HEK293 (cell line): ENCODE measurements at regions of chr10 and their contacts with region 1.

Region 1: DNA sequence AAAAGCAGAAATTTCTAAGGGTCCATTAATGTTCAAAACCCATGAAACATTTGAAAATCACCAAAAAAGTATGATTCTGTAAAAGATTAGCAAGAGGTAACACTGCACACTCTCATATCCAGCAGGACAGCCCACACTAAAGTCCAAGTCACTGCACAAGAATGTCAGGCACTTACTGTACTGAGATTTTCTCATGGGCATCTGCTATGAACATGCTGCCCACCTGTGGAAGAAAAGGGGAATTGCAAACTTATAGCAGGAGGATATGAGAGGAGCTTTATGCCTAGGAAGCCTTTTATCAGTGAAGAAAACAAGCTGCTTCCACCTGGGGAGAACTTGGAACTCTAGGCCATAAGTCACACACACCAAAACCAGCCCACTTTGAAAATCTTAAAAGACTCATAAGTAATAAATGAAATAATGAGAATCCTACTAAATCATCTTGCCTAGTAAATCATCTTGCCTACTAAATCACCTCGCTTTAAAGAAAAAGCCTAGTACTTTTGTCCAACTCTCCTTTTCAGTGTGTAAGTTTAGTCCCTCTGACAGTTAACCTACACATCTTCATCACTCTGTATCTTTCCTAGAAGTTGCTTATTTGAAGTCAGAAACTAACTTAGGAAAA is 46.1 kb downstream of the ARMH3 start:
- H3K4me3 ChIP-seq: no peak overlapping the region
- H3K27ac ChIP-seq: no peak overlapping the region
- H3K4me1 ChIP-seq: no peaks in the 10 kb centered on the region
- CTCF ChIP-seq: peak; percentile 80; the same call in 1 of the 2 replicates

Region 2: DNA sequence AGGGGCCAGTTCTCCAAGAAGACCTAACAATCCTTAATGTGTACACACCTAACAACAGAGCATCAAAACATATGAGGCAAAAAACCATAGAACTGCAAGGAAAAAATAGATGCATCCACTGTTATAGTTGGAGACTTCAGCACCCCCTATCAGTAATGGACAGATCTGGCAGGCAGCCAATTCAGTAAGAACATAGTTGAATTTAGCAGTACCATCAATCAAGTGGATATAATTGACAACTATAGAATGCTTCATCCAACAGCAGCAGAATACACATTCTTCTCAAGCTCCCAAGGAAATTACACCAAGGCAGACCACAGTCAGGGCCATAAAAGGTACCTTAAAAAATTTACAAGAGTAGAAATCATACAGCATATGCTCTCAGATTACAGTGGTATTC is 464.0 kb before region 1 on chr10:
- CTCF ChIA-PET with region 1: no interaction called
- POLR2A ChIA-PET with region 1: no interaction called
- H3K4me3 ChIP-seq: no peak overlapping the region
- H3K27ac ChIP-seq: no peak overlapping the region
- H3K4me1 ChIP-seq: 0 out of 2 replicates have a peak, but pooled peaks cover 3% of the 10 kb centered on the region
- CTCF ChIP-seq: no peak

Region 3: DNA sequence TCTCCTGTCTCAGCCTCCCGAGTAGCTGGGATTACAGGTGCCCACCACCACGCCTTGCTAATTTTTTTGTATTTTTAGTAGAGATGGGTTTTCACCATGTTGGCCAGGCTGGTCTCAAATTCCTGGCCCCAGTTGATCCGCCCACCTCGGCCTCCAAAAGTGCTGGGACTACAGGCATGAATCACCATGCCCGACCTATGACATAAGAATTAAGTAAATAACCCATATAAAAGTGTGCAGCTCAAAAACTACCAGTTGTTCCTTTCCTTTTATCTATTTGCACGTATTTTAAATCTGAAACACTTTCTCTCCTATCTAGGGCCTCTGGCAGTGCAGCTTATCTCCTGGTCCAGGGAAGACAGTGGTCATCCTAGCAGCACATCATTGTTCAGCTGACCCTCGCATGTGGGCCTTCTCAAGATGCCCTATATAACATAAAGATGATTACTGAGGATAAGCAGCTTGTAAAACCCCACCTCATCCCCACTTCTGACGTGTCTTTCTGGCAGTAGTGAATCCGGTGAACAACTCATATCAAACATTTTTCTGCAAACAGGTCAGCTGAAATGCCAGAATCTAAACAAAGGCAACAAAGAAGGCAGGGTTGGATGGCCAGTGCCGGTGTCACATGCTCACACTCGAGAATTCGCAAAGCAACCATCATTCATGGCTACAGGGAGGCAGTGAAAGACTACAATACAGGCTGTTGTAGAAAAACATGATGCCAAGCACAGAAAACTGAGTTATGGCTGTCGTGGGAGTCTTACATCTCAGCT is 130.3 kb before region 1 on chr10:
- CTCF ChIA-PET with region 1: interaction called, 55 read pairs
- POLR2A ChIA-PET with region 1: no interaction called
- H3K4me3 ChIP-seq: no peak overlapping the region
- H3K27ac ChIP-seq: no peak overlapping the region
- H3K4me1 ChIP-seq: no peaks in the 10 kb centered on the region; the same call in 1 of the 2 replicates
- CTCF ChIP-seq: no peak

Region 4: DNA sequence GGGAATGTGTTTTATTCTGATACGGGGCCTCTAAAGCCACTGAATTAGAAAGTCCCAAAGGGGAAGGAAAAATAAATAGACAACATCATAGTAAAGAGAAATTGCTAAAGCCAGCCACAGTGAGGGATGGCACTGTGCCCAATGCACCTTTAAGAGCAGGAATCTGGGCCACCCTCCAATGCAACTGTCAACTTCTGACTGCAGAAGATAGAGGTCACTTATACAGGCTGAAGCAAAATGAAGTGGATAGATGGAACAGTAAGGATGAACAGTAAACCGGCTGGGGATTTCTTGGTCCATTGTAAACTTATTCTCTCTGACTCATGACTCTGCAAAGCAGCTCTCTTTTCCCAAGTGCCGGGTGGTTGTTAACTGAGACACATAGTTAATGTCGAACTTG is 112.3 kb before region 1 on chr10:
- CTCF ChIA-PET with region 1: interaction called, 167 read pairs
- POLR2A ChIA-PET with region 1: interaction called, 3 read pairs
- H3K4me3 ChIP-seq: no peak overlapping the region
- H3K27ac ChIP-seq: no peak overlapping the region; the same call in 1 of the 2 replicates
- H3K4me1 ChIP-seq: peaks cover 26% of the 10 kb centered on the region
- CTCF ChIP-seq: no peak

Region 5: DNA sequence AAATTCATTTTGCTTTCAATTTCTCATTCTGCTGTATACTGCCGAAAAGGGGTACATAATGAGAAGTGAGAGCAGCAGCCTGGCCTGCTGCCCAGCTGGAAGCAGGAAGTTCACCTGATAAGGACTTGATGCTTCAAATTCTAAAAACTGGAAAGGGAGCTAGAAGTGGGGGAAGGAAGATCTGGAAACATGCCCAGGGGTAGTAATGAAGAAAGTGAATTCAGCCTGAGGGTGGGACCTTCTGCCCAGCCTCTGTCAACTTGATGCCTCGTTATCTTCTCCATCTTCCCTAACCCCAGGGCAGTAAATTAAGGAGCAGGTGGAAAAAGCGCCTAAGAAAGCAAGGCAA is 23.3 kb before region 1 on chr10:
- CTCF ChIA-PET with region 1: interaction called, 17 read pairs
- POLR2A ChIA-PET with region 1: no interaction called
- H3K4me3 ChIP-seq: no peak overlapping the region
- H3K27ac ChIP-seq: peak overlapping the region; percentile 50; the same call in 1 of the 2 replicates
- H3K4me1 ChIP-seq: peaks cover 16% of the 10 kb centered on the region
- CTCF ChIP-seq: no peak

Region 6: DNA sequence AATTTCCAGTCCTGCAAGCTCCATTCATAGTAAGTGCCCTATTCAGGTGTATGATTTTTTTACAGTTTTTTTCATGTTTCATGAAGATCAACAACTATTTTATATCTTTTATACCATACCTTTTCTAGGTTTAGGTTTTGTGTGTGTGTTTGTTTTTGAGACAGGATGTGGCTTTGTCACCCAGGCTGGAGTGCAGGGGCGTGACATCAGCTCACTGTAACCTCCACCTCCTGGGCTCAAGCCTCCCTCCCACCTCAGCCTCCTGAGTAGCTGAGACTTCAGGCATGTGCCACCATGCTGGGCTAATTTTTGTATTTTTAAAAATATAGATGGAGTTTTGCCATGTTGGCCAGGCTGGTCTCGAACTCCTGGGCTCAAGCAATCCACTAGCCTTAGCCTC is 11.0 kb after region 1 on chr10:
- CTCF ChIA-PET with region 1: interaction called, 31 read pairs
- POLR2A ChIA-PET with region 1: no interaction called
- H3K4me3 ChIP-seq: no peak overlapping the region
- H3K27ac ChIP-seq: no peak overlapping the region
- H3K4me1 ChIP-seq: no peaks in the 10 kb centered on the region
- CTCF ChIP-seq: no peak

Region 7: GRCh38 chr10:102072673-102073527 is 63.0 kb after region 1 on chr10:
- CTCF ChIA-PET with region 1: interaction called, 25 read pairs
- POLR2A ChIA-PET with region 1: no interaction called
- H3K4me3 ChIP-seq: no peak overlapping the region
- H3K27ac ChIP-seq: no peak overlapping the region
- H3K4me1 ChIP-seq: peaks cover 6% of the 10 kb centered on the region
- CTCF ChIP-seq: peak; percentile 85

Region 8: DNA sequence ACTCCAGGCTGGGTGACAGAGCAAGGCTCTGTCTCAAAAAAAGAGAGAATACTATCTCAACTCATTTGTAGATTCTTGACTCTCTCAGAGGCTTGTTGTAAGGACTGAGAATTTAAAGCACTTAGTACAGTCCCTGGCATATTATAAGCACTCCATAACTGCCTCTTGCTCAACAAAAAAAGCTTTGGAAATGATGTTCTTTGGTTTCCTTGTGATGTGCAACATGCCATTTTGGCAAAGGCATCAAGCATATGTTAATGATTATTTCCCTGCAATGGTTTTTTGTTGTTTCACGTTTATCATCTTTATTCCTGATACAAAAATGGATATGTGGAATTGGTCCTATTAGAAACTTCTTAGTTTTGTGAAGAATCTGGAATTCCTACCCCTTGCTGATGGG is 157.9 kb after region 1 on chr10:
- CTCF ChIA-PET with region 1: no interaction called
- POLR2A ChIA-PET with region 1: no interaction called
- H3K4me3 ChIP-seq: no peak overlapping the region
- H3K27ac ChIP-seq: no peak overlapping the region
- H3K4me1 ChIP-seq: no peaks in the 10 kb centered on the region
- CTCF ChIP-seq: no peak

Region 9: DNA sequence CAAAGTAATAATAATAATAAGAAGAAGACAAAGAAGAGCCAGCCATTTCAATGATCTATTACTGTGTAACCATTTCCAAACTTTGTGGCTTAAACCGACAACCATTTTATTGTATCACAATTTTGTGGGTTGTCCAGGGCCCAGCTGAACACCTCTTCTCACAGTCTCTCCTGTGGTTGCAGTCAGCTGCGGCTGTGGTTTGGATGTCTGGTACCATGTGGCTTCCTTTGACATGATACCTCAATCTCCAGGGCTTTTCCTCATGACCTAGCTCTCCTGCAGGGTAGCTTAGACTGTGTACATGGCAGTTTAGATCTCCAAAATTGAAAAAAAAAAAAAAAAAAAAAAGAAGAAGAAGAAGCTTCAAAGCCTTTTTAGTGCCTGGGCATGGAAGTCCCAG is 313.0 kb after region 1 on chr10:
- CTCF ChIA-PET with region 1: no interaction called
- POLR2A ChIA-PET with region 1: no interaction called
- H3K4me3 ChIP-seq: no peak overlapping the region
- H3K27ac ChIP-seq: no peak overlapping the region
- H3K4me1 ChIP-seq: peaks cover 8% of the 10 kb centered on the region; the same call in 1 of the 2 replicates
- CTCF ChIP-seq: no peak